ENCODE measurements at regions of chr20 and their contacts with region 1.

Region 1: DNA sequence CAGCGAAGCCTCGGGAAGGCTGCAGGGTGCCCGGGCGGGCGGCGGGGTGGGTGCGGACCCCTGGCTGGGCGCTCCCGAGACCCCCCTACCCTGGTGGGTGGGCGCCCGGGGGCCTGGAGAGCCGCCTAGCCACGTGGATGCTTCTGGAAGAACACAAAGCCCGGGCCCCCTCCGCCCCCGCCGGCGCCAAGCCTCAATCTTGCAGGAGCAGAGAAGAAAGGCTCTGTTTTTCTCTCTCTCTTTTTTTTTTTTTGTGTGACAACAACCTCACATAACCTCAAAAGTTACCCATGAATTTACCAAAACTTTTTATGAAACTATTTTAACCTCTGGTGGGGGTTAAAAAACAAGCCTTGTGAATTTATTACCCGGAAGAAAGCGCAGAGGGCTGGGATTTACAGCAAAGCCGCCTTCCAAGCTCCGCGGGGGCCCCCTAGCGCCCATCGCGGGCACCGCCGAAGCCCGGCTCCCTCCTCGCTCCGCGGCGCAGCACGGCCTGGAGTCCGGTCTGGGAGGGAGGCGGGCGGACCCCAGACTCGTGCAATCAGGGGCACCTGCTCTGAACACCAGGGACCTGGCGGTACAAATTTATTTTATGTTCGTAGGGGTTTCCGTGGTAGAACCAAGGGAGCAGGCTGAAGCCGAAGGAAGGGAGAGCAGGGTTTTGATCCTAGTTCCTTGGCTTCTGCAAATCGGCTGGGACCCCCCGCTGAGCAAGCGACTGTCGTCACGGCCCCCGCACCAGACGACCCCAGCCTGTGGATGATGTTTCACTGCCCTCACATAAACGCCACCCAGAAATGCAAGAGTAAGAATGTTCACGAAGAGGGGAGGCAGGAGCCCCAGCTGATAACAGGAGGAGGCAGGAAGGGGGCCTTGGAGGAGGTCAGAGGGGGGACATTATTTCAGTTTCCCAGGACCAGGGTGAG is 58.9 kb downstream of the ZNF831 start:
- DNase-seq: peak; percentile 89
- ATAC-seq: peak; percentile 88

Region 2: GRCh38 chr20:59495894-59496510 is 273.5 kb after region 1 on chr20:
- intact Hi-C with region 1: loop called (anchors 5 kb)
- DNase-seq: no peak
- ATAC-seq: peak; percentile 60